ENCODE measurements at regions of chr6 and their contacts with region 1.

Region 1: DNA sequence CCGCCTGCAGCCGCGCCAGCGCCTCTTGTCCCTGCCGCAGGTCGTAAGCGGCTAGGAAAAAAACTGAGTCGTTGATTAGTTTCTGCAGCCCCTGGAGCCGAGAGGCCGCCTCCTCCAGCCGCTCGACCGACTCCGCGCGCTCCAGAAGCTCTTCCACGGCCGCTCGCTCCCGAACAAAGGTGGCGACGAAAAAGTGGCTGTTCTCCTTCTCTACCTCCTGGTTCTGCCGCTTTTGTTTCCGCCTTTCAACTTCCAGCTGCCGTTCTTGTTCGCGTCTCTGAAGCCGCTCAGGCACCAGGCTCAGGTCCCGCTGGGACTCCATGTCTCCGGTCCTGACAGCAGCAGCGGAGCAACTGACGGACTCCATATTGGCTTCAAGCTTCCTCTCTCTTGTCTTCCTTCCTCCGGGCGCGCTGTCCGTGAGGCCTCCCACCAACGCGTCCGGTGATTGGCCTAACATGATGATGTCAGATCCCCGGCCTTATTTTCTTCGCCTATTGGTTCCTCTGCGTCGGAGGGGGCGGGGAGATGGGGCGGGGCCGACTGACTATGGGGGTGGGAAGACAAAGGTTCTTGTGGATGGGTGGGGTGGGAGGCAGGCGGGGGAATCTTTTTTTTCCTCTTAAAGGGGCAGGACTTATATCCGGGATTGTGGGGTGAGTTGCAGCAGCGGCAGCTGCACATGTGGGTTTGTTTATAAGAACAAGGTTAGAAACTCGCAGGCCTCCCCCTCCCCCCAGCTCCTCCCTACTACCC is at the start of gene TBCC:
- H3K4me3 ChIP-seq: peak within 1 kb of the TSS; percentile 97
- H3K27ac ChIP-seq: peak within 1 kb of the TSS; percentile 93
- H3K4me1 ChIP-seq: peaks cover 26% of the 10 kb centered on the region
- CTCF ChIP-seq: no peak

Region 2: DNA sequence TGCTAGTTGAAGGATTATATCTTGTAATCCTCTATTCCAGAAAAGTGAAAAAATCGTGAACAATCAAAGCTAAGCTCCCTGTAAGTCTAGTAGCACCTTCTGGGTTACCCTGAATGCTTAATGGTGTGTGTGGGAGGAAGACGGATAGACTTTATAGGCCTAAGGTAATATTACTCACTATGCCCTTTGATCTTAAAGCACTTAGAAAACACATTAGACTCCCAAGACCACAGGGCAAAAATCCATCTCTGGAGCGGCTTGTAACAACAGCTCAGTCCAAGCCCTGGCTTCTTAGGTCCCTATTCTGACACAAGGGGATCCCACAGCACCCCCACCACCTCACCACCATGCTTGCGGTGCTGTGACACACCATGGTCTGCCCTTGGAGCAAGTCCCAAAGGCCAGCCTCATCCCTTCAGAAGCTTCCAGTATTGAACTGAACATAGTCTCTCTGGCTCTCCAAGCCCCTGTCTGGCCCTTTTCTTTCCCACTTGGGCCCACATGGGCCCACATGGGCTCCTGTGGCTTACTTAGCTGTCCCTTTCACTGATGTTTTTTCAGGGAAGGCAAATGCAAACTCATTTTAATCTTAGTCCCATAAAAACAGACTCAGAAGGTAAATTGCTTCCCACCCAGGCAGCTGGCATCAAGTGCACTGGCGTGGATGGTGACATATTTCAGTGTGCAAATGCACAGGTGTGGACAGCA is 631.8 kb before region 1 on chr6:
- CTCF ChIA-PET with region 1: no interaction called
- POLR2A ChIA-PET with region 1: interaction called, 11 read pairs
- H3K4me3 ChIP-seq: no peak overlapping the region
- H3K27ac ChIP-seq: no peak overlapping the region
- H3K4me1 ChIP-seq: peaks cover 5% of the 10 kb centered on the region
- CTCF ChIP-seq: no peak

Region 3: DNA sequence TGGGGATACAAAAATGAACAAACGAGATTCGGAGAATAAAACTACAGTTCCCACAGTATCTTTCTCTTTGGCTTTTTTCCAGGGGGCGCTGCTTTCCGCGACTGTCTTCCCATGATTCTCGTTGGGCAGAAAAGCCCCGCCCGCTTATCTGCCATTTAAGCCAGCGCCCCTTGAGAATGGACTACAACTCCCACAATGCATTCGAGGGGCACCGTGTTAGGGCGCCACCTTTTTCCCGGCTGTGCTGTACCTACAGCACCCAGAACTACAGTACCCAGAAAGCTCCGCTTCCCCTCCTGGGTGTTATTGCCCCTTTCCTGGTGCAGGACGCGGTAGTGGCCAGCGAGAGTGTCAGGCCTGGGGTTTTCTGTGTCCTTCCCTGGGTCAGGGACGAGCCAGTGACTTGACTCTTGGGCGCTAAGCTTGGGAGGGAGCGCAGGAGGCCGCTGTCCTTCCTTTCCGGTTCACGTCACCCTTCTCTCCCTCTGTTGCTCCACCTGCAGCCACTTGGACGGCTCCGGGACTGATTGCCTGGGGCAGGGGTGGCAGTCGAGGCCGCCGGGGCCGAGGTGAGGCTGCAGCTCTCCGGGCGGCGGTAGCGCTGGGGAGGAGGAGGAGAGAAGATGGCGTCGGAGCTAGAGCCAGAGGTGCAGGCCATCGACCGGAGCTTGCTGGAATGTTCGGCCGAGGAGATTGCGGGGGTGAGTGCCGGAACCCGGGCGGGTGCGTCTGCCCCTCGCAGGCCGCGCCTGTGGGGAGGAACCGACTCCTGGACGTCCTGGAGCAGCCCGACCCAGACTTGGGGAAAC is 182.0 kb before region 1 on chr6 and contains the start of gene UBR2:
- CTCF ChIA-PET with region 1: no interaction called
- POLR2A ChIA-PET with region 1: interaction called, 12 read pairs
- H3K4me3 ChIP-seq: peak within 1 kb of the TSS; percentile 82
- H3K27ac ChIP-seq: peak within 1 kb of the TSS; percentile 59
- H3K4me1 ChIP-seq: no peaks in the 10 kb centered on the region
- CTCF ChIP-seq: peak; percentile 96

Region 4: DNA sequence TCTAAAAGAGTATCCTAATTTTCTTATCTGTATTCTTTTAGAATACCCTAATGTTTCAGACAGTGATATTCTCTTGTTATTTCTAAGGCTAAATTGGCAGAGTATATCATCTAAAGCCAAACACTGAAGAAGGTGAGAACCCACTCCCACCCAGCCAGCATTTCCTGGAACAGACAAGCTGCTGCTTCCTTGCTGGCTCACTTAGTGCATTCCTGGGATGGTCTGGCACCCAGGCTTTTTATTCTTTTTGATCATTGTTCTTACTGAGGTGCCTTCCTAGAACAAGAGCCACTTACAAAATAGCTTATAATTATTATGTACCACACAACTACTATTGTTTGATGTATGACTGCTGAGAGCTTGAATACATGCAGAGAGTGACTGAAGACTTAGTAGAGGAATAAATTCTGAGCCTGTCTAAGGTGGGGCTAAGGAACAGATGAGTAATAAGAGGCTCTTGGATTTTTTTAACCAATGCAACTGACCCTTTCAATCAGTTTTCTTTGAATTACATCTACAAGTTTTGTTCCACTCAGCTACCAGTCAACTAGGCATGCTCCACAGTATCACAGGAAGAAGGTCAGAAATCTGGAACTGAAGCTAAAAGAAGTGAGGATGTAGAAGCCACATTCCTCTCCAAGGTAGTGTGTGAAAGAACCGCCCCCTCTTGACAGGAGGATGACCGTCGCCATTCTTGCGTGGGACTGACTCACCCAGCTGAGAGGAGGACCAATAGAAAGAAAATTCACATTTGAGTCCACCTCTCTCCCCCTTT is 53.6 kb before region 1 on chr6:
- CTCF ChIA-PET with region 1: no interaction called
- POLR2A ChIA-PET with region 1: no interaction called
- H3K4me3 ChIP-seq: no peak overlapping the region
- H3K27ac ChIP-seq: no peak overlapping the region
- H3K4me1 ChIP-seq: no peaks in the 10 kb centered on the region
- CTCF ChIP-seq: no peak

Region 5: GRCh38 chr6:42726485-42727086 is 19.3 kb before region 1 on chr6:
- CTCF ChIA-PET with region 1: interaction called, 9 read pairs
- POLR2A ChIA-PET with region 1: interaction called, 15 read pairs
- H3K4me3 ChIP-seq: no peak overlapping the region
- H3K27ac ChIP-seq: no peak overlapping the region
- H3K4me1 ChIP-seq: peaks cover 5% of the 10 kb centered on the region
- CTCF ChIP-seq: peak; percentile 89

Region 6: GRCh38 chr6:42782622-42783176 is 36.8 kb after region 1 on chr6:
- CTCF ChIA-PET with region 1: interaction called, 4 read pairs
- POLR2A ChIA-PET with region 1: interaction called, 316 read pairs
- H3K4me3 ChIP-seq: peak overlapping the region; percentile 98
- H3K27ac ChIP-seq: peak overlapping the region; percentile 100
- H3K4me1 ChIP-seq: peaks cover 10% of the 10 kb centered on the region; the same call in 1 of the 2 replicates
- CTCF ChIP-seq: no peak

Region 7: GRCh38 chr6:42890311-42891198 is 144.7 kb after region 1 on chr6:
- CTCF ChIA-PET with region 1: no interaction called
- POLR2A ChIA-PET with region 1: interaction called, 31 read pairs
- H3K4me3 ChIP-seq: peak overlapping the region; percentile 66
- H3K27ac ChIP-seq: peak overlapping the region; percentile 94
- H3K4me1 ChIP-seq: no peaks in the 10 kb centered on the region
- CTCF ChIP-seq: peak; percentile 51; the same call in 1 of the 2 replicates